Activated CD8-positive, alpha-beta T cell treated with anti-CD3 and anti-CD28 coated beads for 36 hours (primary cell): ENCODE measurements at regions of chr2 and their contacts with region 1.

Region 1: GRCh38 chr2:70086838-70087701 is at the start of gene PCBP1:
- DNase-seq: peak; percentile 96
- ATAC-seq: peak; percentile 60
- H3K4me3 Mint-ChIP-seq: peak within 1 kb of the TSS; percentile 99
- H3K27ac Mint-ChIP-seq: peak within 1 kb of the TSS; percentile 98
- H3K4me1 Mint-ChIP-seq: peaks cover 53% of the 10 kb centered on the region
- H3K27me3 Mint-ChIP-seq: no peaks in the 10 kb centered on the region
- CTCF ChIP-seq: no peak
- total RNA-seq, gene PCBP1: 470 to 489 TPM

Region 2: GRCh38 chr2:70070541-70071268 is 16.4 kb before region 1 on chr2:
- CTCF ChIA-PET with region 1: interaction called, 107 read pairs
- POLR2A ChIA-PET with region 1: interaction called, 131 read pairs
- intact Hi-C with region 1: loop called (anchors 2 kb)
- DNase-seq: peak; percentile 74
- ATAC-seq: peak; percentile 72
- H3K4me3 Mint-ChIP-seq: peak overlapping the region; percentile 40
- H3K27ac Mint-ChIP-seq: peak overlapping the region; percentile 87
- H3K4me1 Mint-ChIP-seq: peaks cover 44% of the 10 kb centered on the region
- H3K27me3 Mint-ChIP-seq: no peaks in the 10 kb centered on the region
- CTCF ChIP-seq: peak; percentile 67

Region 3: GRCh38 chr2:70161069-70161534 is 74.0 kb after region 1 on chr2:
- CTCF ChIA-PET with region 1: no interaction called
- POLR2A ChIA-PET with region 1: no interaction called
- intact Hi-C with region 1: no loop called
- DNase-seq: peak; percentile 11
- ATAC-seq: no peak
- H3K4me3 Mint-ChIP-seq: no peak overlapping the region
- H3K27ac Mint-ChIP-seq: peak overlapping the region; percentile 70
- H3K4me1 Mint-ChIP-seq: peaks cover 4% of the 10 kb centered on the region
- H3K27me3 Mint-ChIP-seq: no peaks in the 10 kb centered on the region
- CTCF ChIP-seq: no peak

Region 4: GRCh38 chr2:70190418-70191243 is 103.6 kb after region 1 on chr2 and contains the start of gene C2orf42:
- CTCF ChIA-PET with region 1: no interaction called
- POLR2A ChIA-PET with region 1: interaction called, 14 read pairs
- intact Hi-C with region 1: loop called (anchors 2 kb)
- DNase-seq: peak; percentile 98
- ATAC-seq: peak; percentile 85
- H3K4me3 Mint-ChIP-seq: peak within 1 kb of the TSS; percentile 87
- H3K27ac Mint-ChIP-seq: peak within 1 kb of the TSS; percentile 99
- H3K4me1 Mint-ChIP-seq: peaks cover 19% of the 10 kb centered on the region
- H3K27me3 Mint-ChIP-seq: no peaks in the 10 kb centered on the region
- CTCF ChIP-seq: no peak
- total RNA-seq, gene C2orf42: 19.2 to 24.6 TPM